A549 (cell line): ENCODE measurements at regions of chr5 and their contacts with region 1.

Region 1: GRCh38 chr5:33299621-33300208 is 141.1 kb upstream of the TARS1 start:
- DNase-seq: peak; percentile 2 to 47
- ATAC-seq: peak; percentile 74 to 84; a peak in 5 of 6 replicates
- H3K4me3 ChIP-seq: no peak overlapping the region
- H3K27ac ChIP-seq: peak overlapping the region; percentile 9 to 29; a peak in 2 of 6 replicates
- H3K4me1 ChIP-seq: peaks cover 5% of the 10 kb centered on the region; the same call in 1 of the 3 replicates
- CTCF ChIP-seq: peak; percentile 75
- EP300 ChIP-seq: no peak
- POLR2A ChIP-seq: no peak
- RAD21 ChIP-seq: peak; percentile 79 to 83

Region 2: GRCh38 chr5:33180900-33181299 is 118.8 kb before region 1 on chr5:
- CTCF ChIA-PET with region 1: interaction called, 11 read pairs
- POLR2A ChIA-PET with region 1: no interaction called
- DNase-seq: peak; percentile 3 to 52
- ATAC-seq: peak in 1 of 2 experiments; percentile 73; a peak in 3 of 6 replicates
- H3K4me3 ChIP-seq: no peak overlapping the region
- H3K27ac ChIP-seq: no peak overlapping the region
- H3K4me1 ChIP-seq: no peaks in the 10 kb centered on the region
- CTCF ChIP-seq: peak; percentile 85
- EP300 ChIP-seq: no peak
- POLR2A ChIP-seq: no peak
- RAD21 ChIP-seq: peak; percentile 82 to 94

Region 3: DNA sequence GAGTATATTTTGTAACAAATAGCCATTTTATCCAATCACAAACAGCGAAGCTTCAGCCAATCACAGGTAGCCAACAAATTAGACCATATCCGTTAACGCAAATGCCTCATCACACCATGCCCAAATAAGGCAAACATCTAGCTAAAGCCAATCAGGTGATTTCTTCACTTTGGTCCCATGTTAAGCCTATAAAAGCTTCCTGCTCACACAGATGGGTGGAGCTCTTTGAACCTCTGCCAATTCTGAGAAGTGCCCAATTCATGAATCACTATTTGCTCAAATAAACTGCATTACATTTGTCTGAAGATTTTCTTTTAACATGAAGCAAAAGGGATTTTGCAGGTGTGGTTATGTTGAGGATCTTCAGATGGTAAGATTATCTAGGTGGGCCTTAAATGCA is 13.4 kb after region 1 on chr5:
- CTCF ChIA-PET with region 1: interaction called, 54 read pairs
- POLR2A ChIA-PET with region 1: interaction called, 4 read pairs
- DNase-seq: peak; percentile 6 to 94
- ATAC-seq: peak; percentile 76 to 89
- H3K4me3 ChIP-seq: no peak overlapping the region
- H3K27ac ChIP-seq: peak overlapping the region; percentile 58 to 77
- H3K4me1 ChIP-seq: peaks cover 23% of the 10 kb centered on the region
- CTCF ChIP-seq: no peak
- EP300 ChIP-seq: no peak; a peak in 1 of 5 replicates
- POLR2A ChIP-seq: no peak
- RAD21 ChIP-seq: no peak